OCI-LY7 (cell line): ENCODE measurements at regions of chr14 and their contacts with region 1.

Region 1: GRCh38 chr14:55316567-55316966 is 45.3 kb downstream of the FBXO34 start:
- DNase-seq: no peak
- H3K4me3 ChIP-seq: no peak overlapping the region
- H3K27ac ChIP-seq: no peak overlapping the region
- H3K4me1 ChIP-seq: no peaks in the 10 kb centered on the region
- CTCF ChIP-seq: no peak

Region 2: GRCh38 chr14:55074662-55075061 is 241.9 kb before region 1 on chr14:
- CTCF ChIA-PET with region 1: no interaction called
- POLR2A ChIA-PET with region 1: no interaction called
- intact Hi-C with region 1: no loop called
- DNase-seq: peak; percentile 43
- H3K4me3 ChIP-seq: peak overlapping the region; percentile 3
- H3K27ac ChIP-seq: no peak overlapping the region
- H3K4me1 ChIP-seq: peaks cover 29% of the 10 kb centered on the region
- CTCF ChIP-seq: no peak

Region 3: GRCh38 chr14:55303691-55304145 is 12.8 kb before region 1 on chr14:
- CTCF ChIA-PET with region 1: no interaction called
- POLR2A ChIA-PET with region 1: interaction called, 12 read pairs
- intact Hi-C with region 1: no loop called
- DNase-seq: peak; percentile 49
- H3K4me3 ChIP-seq: no peak overlapping the region
- H3K27ac ChIP-seq: no peak overlapping the region
- H3K4me1 ChIP-seq: peaks cover 27% of the 10 kb centered on the region
- CTCF ChIP-seq: no peak